ENCODE measurements at regions of chr2 and their contacts with region 1.

Region 1: GRCh38 chr2:39436592-39437510 is at the start of gene MAP4K3:
- DNase-seq: peak; percentile 91 to 96
- H3K4me3 ChIP-seq: peak within 1 kb of the TSS; percentile 90 to 94
- H3K27ac ChIP-seq: peak within 1 kb of the TSS; percentile 96 to 98
- H3K4me1 ChIP-seq: peaks cover 0 to 61% (median 40%) of the 10 kb centered on the region in 4 donors
- H3K27me3 ChIP-seq: no peaks in the 10 kb centered on the region
- CTCF ChIP-seq: no peak

Region 2: GRCh38 chr2:39338502-39338901 is 98.3 kb before region 1 on chr2:
- intact Hi-C with region 1: no loop called
- DNase-seq: no peak
- H3K4me3 ChIP-seq: no peak overlapping the region
- H3K27ac ChIP-seq: no peak overlapping the region
- H3K4me1 ChIP-seq: peaks cover 0 to 9% (median 0%) of the 10 kb centered on the region in 4 donors
- H3K27me3 ChIP-seq: no peaks in the 10 kb centered on the region
- CTCF ChIP-seq: no peak

Region 3: DNA sequence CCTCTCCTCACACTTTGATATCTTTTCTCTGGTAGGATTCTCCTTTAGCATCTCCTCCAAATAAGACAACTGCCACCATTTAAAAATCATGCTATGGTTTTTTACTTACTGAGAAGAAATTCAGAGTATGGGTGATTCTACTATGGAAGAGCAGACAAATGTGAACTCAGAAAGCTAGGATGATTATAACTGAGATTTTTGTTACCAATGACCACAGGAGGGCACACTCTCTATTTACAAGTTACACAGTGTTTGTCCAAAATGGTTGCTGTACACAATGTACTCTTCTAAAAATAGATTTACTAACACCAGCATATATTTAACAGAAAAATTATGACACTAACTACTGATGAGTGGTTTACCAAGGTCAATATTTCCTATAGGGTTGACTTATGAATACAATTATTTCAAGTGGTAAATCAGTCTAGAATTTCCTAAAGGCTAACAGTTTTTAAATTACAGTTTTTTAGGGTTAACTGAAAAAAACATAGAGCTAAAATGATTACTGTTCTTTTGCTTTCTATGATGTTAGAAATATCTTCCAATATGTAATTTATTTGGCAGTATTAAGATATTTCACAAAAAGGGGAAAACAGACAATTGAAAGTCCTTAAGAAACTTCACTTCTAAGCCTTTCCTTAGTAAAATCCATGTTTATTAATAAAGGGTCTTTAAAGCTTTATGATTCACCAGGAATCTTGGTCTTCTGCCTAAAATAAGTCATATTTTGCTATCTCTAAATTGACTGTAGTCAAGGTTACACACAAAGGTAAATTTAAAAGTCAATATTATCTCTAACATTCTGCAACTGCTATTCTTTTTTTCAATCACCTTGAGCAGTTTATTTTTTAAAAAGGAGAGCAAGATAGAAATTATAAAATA is 57.0 kb before region 1 on chr2:
- intact Hi-C with region 1: loop called (anchors 5 kb)
- DNase-seq: no peak
- H3K4me3 ChIP-seq: no peak overlapping the region
- H3K27ac ChIP-seq: peak overlapping the region; percentile 38 to 40
- H3K4me1 ChIP-seq: peaks cover 0 to 52% (median 25%) of the 10 kb centered on the region in 4 donors
- H3K27me3 ChIP-seq: no peaks in the 10 kb centered on the region
- CTCF ChIP-seq: peak; percentile 43 to 72

Measured in tibial artery (tissue), 4 donors.